ACHN (cell line): ENCODE measurements at regions of chr1 and their contacts with region 1.

Region 1: DNA sequence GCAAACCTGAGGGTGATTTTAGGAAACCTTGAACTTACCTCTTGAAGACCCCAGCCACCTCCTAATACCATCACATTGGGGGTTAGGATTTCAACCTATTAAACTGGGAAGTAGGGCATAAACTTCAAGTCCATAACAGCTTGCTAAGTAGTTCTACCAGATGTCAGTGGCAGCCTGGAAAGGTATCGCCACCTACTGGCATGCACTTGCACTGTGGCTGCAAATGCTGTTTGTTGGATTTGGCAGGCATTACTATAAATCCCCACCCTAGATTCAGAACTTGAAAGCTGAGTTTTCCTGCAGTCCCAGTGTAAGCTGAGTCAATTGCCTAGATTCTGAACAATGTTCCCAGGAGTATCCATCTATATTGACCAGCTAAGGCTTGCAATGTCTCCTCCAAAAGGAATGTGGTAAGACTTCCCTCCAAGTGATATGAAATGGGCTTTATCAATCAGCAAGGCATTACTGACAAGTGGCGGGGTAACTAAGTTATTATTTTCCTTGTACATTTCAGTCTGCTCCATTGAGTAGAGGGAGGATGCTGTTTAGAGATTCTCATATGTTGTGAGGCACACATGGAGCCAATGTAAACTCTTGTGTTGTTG is 474.5 kb downstream of the PTPRC start:
- DNase-seq: peak; percentile 67

Region 2: GRCh38 chr1:198771563-198772153 is 341.7 kb before region 1 on chr1:
- in situ Hi-C with region 1: no loop called
- DNase-seq: peak; percentile 66

Region 3: DNA sequence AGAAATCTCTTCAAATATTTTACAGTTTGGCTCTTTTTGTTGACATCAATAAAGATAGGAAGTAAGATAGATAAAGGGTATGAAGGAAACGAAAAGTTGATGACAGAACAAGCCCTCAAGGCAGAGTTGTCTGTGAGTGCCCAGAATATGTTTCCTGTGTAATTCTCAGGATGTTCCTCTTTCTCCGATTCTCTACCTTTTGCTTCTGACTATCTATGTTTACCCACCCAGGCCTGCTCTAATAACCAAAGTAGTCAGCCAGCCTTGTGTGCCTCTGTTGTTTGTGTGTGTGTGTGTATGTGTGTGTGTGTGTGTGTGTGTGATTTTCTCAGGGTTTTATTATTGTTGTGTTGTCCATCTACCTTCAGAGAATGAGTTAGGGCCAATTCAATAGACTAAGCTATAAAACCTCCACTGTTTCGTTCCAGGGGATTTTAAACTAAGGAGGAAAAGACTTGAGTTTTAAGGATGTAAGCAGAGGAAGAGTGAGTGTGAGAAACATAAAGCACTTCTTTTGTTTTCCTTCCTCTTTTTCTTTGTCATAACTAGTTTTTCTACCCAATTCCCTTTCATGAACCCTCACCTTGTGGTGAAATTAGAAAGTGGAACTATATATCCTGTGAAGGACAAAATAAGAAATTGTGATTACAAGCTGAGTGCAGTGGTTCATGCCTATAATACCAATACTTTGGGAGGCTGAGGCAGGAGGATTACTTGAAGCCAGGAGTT is 286.8 kb after region 1 on chr1:
- in situ Hi-C with region 1: no loop called
- DNase-seq: no peak

Region 4: GRCh38 chr1:199463521-199464128 is 350.3 kb after region 1 on chr1:
- in situ Hi-C with region 1: loop called (anchors 25 kb)
- DNase-seq: peak; percentile 66